ENCODE measurements at regions of chr16 and their contacts with region 1.

Region 1: DNA sequence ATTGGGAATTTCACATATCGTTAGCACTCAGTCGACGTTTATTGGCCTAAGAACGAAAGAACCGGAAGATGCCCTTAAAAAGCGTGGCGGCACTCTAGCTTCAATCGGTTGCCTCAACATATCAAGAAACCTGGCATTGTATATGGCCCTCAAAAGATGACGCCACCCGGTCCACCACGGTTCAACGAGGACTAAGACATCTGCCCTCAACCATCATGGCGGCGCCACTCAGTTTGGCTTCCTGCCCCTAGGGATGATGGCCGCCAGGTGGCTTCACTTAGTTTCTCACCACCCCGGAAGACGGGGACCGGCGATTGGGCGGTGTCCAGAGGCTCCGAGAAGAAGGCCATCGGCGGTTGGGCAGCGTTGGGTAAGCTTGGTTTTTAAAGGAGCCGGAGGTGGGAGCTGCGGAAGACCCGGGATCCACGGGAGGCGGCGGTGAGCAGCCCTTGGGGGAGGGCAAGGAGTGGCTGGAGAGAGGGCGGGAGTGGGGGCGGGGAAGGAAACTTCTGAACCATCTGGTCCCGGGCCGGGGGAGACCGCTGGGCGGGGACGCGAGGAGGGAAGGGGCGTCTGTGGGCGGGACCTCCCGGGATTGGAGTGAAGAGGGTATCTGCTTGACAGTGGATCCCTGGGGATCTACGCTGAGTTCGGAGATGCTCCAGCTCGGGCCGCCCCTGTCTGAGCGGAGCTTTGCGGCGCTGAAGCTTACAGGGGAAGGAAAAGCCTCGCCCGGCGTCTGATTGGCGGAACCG is at the start of gene PRR14:
- DNase-seq: peak; percentile 98 to 100 (median 100)

Region 2: GRCh38 chr16:30571695-30572600 is 78.6 kb before region 1 on chr16 and contains the start of gene ZNF688:
- intact Hi-C with region 1: loop called (anchors 5 kb)
- DNase-seq: peak; percentile 90 to 99 (median 95)

Region 3: GRCh38 chr16:30698139-30698815 is 47.7 kb after region 1 on chr16:
- intact Hi-C with region 1: loop called (anchors 2 kb)
- DNase-seq: peak; percentile 79 to 99 (median 84)